Pancreas (tissue), 10 donors: ENCODE measurements at regions of chr11 and their contacts with region 1.

Region 1: GRCh38 chr11:126186708-126187529 is 24.5 kb downstream of the RPUSD4 start:
- DNase-seq: peak in 2 of 6 donors; percentile 39 to 53
- ATAC-seq: peak in 1 of 4 donors; percentile 11
- H3K4me3 ChIP-seq: no peak overlapping the region
- H3K27ac ChIP-seq: no peak overlapping the region
- H3K4me1 ChIP-seq: no peaks in the 10 kb centered on the region
- H3K27me3 ChIP-seq: no peaks in the 10 kb centered on the region
- CTCF ChIP-seq: no peak

Region 2: GRCh38 chr11:125923012-125923579 is 263.8 kb before region 1 on chr11:
- intact Hi-C with region 1: loop called (anchors 5 to 10 kb)
- DNase-seq: peak in 4 of 6 donors; percentile 37 to 73 (median 50)
- ATAC-seq: peak; percentile 82 to 94 (median 84)
- H3K4me3 ChIP-seq: no peak overlapping the region
- H3K27ac ChIP-seq: no peak overlapping the region
- H3K4me1 ChIP-seq: peaks cover 0 to 8% (median 0%) of the 10 kb centered on the region in 3 donors
- H3K27me3 ChIP-seq: no peaks in the 10 kb centered on the region
- CTCF ChIP-seq: peak; percentile 49 to 66 (median 62)

Region 3: GRCh38 chr11:125939081-125939521 is 247.8 kb before region 1 on chr11:
- intact Hi-C with region 1: loop called in 1 of 3 experiments (anchors 5 kb)
- DNase-seq: no peak
- ATAC-seq: no peak
- H3K4me3 ChIP-seq: no peak overlapping the region
- H3K27ac ChIP-seq: no peak overlapping the region
- H3K4me1 ChIP-seq: no peaks in the 10 kb centered on the region
- H3K27me3 ChIP-seq: no peaks in the 10 kb centered on the region
- CTCF ChIP-seq: no peak